Endothelial cell of umbilical vein (primary cell): ENCODE measurements at regions of chr19 and their contacts with region 1.

Region 1: DNA sequence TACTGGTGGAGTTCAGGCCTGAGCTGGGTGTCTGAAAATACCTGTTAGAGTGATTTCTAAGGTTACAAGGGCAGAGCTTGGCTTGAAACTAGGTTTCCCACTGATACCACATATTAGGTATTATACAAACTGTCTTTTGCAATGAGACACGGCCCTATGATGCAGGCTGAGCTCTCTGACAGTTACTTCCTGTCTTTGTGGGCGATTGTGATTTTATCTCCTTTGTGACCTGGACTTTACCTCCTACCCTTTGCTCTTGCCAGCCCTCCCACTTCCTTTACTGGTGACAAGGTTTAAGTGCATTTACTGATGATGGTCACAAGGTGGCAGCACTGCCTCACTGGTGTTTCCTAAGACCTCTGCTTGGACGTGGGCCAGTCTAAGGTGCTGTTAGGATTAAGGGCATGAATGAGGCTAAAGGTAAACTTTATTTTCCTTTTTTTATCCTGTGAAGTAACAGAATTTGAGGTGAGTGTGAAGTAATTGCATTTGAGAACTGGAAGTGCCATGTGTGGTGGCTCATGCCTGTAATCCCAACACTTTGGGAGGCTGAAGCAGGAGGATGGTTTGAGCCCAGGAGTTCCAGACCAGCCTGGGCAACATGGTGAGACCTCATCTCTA is 7.7 kb upstream of the CXCL17 start:
- DNase-seq: peak; percentile 75
- H3K4me3 ChIP-seq: no peak overlapping the region
- H3K27ac ChIP-seq: no peak overlapping the region
- H3K4me1 ChIP-seq: peaks cover 7% of the 10 kb centered on the region
- H3K27me3 ChIP-seq: peaks cover 7 to 10% of the 10 kb centered on the region in 2 experiments
- CTCF ChIP-seq: peak; percentile 77 to 85
- POLR2A ChIP-seq: no peak

Region 2: DNA sequence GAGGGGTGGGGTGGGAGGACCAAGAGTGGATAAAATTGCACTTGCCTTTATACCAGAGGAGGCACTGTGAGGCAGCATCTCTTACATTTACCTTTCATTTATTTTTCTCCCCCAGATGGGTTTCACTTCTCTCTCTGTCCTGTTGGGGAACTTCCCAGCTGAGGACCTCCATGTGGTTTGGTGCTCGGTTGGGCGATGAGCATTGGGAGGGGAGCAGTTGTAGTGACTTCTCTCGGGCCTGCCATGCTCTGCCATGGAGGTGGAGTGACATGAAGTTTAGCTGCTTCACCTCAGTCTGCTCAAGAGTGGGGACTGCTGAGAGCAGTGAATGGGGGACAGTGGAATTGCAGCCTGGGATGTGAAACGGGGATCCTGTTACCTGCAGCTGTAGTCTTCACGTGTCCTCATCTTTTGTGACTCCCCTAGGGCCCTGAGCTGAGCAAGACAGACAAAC is 15.4 kb after region 1 on chr19:
- CTCF ChIA-PET with region 1: interaction called, 13 read pairs
- POLR2A ChIA-PET with region 1: no interaction called
- dilution Hi-C with region 1: no loop called
- intact Hi-C with region 1: no loop called
- DNase-seq: no peak
- H3K4me3 ChIP-seq: no peak overlapping the region
- H3K27ac ChIP-seq: no peak overlapping the region
- H3K4me1 ChIP-seq: no peaks in the 10 kb centered on the region
- H3K27me3 ChIP-seq: no peaks in the 10 kb centered on the region
- CTCF ChIP-seq: no peak
- POLR2A ChIP-seq: no peak

Region 3: GRCh38 chr19:42529248-42529764 is 78.9 kb after region 1 on chr19:
- CTCF ChIA-PET with region 1: interaction called, 137 read pairs
- POLR2A ChIA-PET with region 1: interaction called, 3 read pairs
- dilution Hi-C with region 1: no loop called
- intact Hi-C with region 1: loop called (anchors 1 kb)
- DNase-seq: peak; percentile 57
- H3K4me3 ChIP-seq: no peak overlapping the region
- H3K27ac ChIP-seq: no peak overlapping the region
- H3K4me1 ChIP-seq: peaks cover 8% of the 10 kb centered on the region
- H3K27me3 ChIP-seq: no peaks in the 10 kb centered on the region
- CTCF ChIP-seq: peak; percentile 93
- POLR2A ChIP-seq: no peak

Region 4: DNA sequence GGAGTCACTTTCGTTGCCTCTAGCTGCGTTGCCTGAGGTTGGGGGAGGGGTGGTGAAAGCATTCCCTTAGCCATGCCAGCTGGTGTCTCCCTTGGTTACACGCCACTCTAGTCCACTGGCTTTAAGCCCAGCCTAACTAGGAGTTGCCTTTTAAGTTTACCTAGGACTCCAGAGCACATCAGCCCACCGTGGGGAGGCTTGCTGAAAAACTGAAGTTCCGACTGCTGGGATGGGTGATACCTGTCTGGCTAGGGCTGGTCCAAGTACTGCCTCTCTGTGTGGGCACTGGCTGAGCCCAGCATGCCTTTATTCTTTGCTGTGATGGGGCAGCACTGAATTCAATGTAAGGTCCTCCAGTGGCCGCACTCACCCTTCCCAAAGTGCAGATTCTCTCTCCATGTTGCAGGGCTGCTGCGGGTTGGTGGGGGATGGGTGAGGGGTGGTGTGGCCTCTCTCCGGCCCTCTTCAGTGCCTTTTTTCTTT is 89.7 kb after region 1 on chr19:
- CTCF ChIA-PET with region 1: no interaction called
- POLR2A ChIA-PET with region 1: no interaction called
- dilution Hi-C with region 1: no loop called
- intact Hi-C with region 1: loop called (anchors 1 kb)
- DNase-seq: no peak
- H3K4me3 ChIP-seq: no peak overlapping the region
- H3K27ac ChIP-seq: no peak overlapping the region
- H3K4me1 ChIP-seq: no peaks in the 10 kb centered on the region
- H3K27me3 ChIP-seq: no peaks in the 10 kb centered on the region
- CTCF ChIP-seq: no peak
- POLR2A ChIP-seq: no peak

Region 5: DNA sequence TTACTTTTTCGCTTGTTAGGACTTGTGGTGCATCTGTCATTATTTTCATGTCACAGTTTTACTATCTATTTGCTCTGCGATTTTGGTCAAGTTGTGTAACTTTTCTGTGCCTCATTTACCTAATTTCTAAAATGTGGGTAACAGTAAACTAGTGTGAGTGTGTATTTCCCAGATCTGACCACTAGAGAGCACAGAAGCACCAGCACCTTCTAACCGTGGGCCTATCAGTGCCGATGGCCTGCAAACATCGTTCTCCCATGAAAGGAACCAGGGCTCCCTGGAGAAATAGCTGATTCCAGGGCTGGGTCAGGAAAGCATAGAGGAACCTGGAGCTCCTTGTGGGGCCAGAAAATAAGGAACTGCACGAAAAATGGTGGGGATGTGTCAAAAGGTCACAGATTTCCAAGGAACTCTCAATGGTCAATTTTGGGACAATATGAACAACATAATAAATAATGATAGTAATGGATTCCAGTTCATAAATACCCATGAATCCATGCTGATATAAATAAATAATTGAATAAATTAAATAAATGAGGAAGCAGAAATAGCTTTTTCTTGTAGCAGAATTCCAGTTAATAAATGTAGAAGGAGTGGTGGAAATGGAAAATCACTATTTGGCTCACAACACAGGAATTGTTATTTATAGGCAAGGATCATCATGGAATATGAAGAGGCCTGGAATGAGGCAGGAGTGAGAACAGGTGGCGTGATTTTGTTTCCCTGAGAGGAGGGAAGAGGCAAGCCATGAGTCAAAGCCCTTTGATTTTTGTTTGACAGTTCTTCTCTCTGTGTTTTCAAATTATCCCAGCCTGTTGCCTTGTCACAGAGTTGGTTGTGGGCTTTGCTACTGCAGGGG is 113.2 kb after region 1 on chr19:
- CTCF ChIA-PET with region 1: interaction called, 6 read pairs
- POLR2A ChIA-PET with region 1: no interaction called
- dilution Hi-C with region 1: no loop called
- intact Hi-C with region 1: loop called (anchors 1 kb)
- DNase-seq: peak; percentile 38
- H3K4me3 ChIP-seq: no peak overlapping the region
- H3K27ac ChIP-seq: no peak overlapping the region
- H3K4me1 ChIP-seq: no peaks in the 10 kb centered on the region
- H3K27me3 ChIP-seq: no peaks in the 10 kb centered on the region
- CTCF ChIP-seq: peak; percentile 35 to 58
- POLR2A ChIP-seq: no peak

Region 6: GRCh38 chr19:42596391-42597072 is 146.1 kb after region 1 on chr19:
- CTCF ChIA-PET with region 1: interaction called, 20 read pairs
- POLR2A ChIA-PET with region 1: no interaction called
- dilution Hi-C with region 1: no loop called
- intact Hi-C with region 1: loop called (anchors 1 kb)
- DNase-seq: peak; percentile 12
- H3K4me3 ChIP-seq: no peak overlapping the region
- H3K27ac ChIP-seq: no peak overlapping the region
- H3K4me1 ChIP-seq: no peaks in the 10 kb centered on the region
- H3K27me3 ChIP-seq: no peaks in the 10 kb centered on the region
- CTCF ChIP-seq: peak; percentile 76 to 91
- POLR2A ChIP-seq: no peak